B cell (primary cell): ENCODE measurements at regions of chr4 and their contacts with region 1.

Region 1: DNA sequence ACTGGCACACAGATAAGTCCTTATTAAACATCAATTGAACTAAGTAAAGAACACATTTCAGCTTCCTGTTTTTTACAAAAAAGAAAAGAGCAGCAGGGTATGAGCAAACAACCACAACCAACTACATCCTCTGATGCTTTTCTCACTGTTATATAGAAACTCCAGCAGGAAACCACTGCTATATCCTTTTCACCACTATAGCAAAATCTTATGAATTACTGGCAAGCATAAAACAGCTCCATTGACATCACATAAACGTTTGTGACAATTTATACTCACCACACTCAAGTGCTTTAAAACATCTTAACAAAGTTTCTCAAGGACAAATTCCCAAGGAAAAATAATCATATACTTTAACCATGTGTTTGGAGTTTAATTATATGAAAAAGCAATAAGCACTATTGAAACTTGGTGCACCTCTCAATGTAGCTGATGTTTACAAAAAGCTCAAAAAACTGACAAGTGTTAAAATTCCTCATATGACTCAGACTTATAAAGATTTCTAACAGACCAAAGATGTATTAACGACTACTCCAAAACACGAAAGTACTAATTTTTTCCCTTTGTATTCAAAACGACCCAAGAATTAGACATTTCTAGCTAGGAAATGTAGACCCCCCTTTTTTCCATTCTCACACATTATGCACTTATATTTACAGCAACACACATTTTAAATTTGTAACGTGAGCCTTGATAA is 12.9 kb downstream of the GPRIN3 start:
- DNase-seq: peak; percentile 53
- ATAC-seq: peak; percentile 46
- H3K4me3 ChIP-seq: no peak overlapping the region
- H3K4me3 Mint-ChIP-seq: peak overlapping the region; percentile 48
- H3K27ac ChIP-seq: no peak overlapping the region
- H3K27ac Mint-ChIP-seq: no peak overlapping the region
- H3K4me1 ChIP-seq: peaks cover 54 to 59% of the 10 kb centered on the region in 2 donors
- H3K4me1 Mint-ChIP-seq: peaks cover 63% of the 10 kb centered on the region
- H3K27me3 ChIP-seq: peaks cover 0 to 9% (median 2%) of the 10 kb centered on the region in 4 experiments
- H3K27me3 Mint-ChIP-seq: peaks cover 25% of the 10 kb centered on the region
- CTCF ChIP-seq: no peak

Region 2: DNA sequence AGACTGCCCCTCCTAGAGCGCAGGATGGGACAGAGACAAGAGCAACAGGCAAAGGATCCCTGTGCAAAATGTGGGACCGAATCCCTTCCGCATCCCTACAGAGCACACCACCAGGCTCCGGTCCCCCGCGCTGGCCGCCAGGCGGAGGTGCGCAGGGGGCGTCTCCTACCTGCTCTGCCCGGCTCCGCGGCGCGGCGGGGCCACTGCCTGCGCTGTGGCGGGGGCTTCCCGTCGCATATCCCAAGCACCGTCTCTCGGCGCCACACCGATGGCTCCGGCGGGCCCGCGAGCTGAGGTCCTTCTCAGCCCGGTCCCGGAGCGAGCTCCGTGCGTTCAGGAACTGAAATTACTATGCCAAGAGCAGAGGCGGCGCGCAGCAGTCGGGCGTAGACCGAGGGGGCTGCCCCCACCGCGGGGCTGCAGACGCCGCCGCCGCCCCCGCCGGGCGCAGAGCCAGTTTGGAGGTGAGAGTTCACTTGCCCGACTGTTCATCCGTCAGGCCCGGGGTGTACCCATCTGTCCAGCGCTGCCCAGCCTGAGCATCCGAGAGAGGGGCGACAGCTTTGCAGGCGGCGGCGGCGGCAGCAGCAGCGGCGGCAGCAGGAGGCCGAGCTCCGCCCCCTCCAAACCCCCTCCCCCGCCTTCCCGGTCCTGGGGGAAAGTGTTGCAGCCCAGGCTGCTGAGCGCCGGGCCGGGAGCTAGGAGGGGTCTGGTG is 12.9 kb after region 1 on chr4 and contains the start of gene GPRIN3:
- CTCF ChIA-PET with region 1: interaction called, 5 read pairs
- POLR2A ChIA-PET with region 1: interaction called, 4 read pairs
- intact Hi-C with region 1: loop called (anchors 1 kb)
- DNase-seq: peak; percentile 74
- ATAC-seq: peak; percentile 88
- H3K4me3 ChIP-seq: peak within 1 kb of the TSS; percentile 31 to 81 (median 65)
- H3K4me3 Mint-ChIP-seq: peak within 1 kb of the TSS; percentile 83
- H3K27ac ChIP-seq: peak within 1 kb of the TSS in 1 of 2 donors; percentile 34
- H3K27ac Mint-ChIP-seq: peak within 1 kb of the TSS; percentile 11
- H3K4me1 ChIP-seq: peaks cover 19% of the 10 kb centered on the region in 2 donors
- H3K4me1 Mint-ChIP-seq: peaks cover 32% of the 10 kb centered on the region
- H3K27me3 ChIP-seq: peaks cover 0 to 28% (median 12%) of the 10 kb centered on the region in 4 experiments
- H3K27me3 Mint-ChIP-seq: peaks cover 13% of the 10 kb centered on the region
- CTCF ChIP-seq: no peak
- total RNA-seq, gene GPRIN3: 1.1 and 1.5 TPM in 2 replicates

Region 3: GRCh38 chr4:89331686-89332544 is 37.2 kb after region 1 on chr4:
- CTCF ChIA-PET with region 1: no interaction called
- POLR2A ChIA-PET with region 1: no interaction called
- intact Hi-C with region 1: loop called (anchors 5 kb)
- DNase-seq: no peak
- ATAC-seq: no peak
- H3K4me3 ChIP-seq: no peak overlapping the region
- H3K4me3 Mint-ChIP-seq: no peak overlapping the region
- H3K27ac ChIP-seq: no peak overlapping the region
- H3K27ac Mint-ChIP-seq: no peak overlapping the region
- H3K4me1 ChIP-seq: no peaks in the 10 kb centered on the region
- H3K4me1 Mint-ChIP-seq: peaks cover 7% of the 10 kb centered on the region
- H3K27me3 ChIP-seq: no peaks in the 10 kb centered on the region
- H3K27me3 Mint-ChIP-seq: no peaks in the 10 kb centered on the region
- CTCF ChIP-seq: no peak